Activated CD4-positive, alpha-beta T cell treated with anti-CD3 and anti-CD28 coated beads for 36 hours (primary cell): ENCODE measurements at regions of chr11 and their contacts with region 1.

Region 1: DNA sequence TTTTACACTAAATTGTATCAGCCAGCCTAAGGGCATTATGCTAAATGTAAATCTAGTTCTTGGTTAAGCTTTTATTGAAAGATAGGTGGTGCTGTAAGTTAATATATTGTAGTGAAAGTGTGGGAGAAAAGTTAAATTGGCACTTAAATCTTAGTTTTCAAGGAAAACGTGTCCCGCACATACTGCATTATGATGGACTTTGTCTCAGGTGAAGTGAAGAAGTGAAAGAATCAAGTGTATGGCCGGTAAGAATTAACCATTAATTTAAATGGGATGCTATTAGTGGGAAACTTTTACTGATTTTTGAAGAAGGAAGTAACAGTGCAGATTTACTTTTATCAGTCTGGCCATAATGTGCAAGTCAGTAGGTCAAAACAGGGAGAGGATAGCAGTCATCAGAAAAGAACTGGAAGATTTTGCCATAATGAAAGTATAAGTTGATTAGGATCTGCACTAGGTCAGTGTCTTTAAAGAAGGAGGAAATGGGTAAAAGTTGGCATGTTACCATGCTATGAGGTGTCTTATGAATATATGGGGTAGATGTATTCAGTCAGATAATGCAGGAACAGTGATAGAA is 81.6 kb downstream of the PDHX start:
- DNase-seq: no peak
- ATAC-seq: peak; percentile 39
- H3K4me3 Mint-ChIP-seq: no peak overlapping the region
- H3K27ac Mint-ChIP-seq: peak overlapping the region; percentile 11
- H3K4me1 Mint-ChIP-seq: peaks cover 30% of the 10 kb centered on the region
- H3K27me3 Mint-ChIP-seq: no peaks in the 10 kb centered on the region

Region 2: DNA sequence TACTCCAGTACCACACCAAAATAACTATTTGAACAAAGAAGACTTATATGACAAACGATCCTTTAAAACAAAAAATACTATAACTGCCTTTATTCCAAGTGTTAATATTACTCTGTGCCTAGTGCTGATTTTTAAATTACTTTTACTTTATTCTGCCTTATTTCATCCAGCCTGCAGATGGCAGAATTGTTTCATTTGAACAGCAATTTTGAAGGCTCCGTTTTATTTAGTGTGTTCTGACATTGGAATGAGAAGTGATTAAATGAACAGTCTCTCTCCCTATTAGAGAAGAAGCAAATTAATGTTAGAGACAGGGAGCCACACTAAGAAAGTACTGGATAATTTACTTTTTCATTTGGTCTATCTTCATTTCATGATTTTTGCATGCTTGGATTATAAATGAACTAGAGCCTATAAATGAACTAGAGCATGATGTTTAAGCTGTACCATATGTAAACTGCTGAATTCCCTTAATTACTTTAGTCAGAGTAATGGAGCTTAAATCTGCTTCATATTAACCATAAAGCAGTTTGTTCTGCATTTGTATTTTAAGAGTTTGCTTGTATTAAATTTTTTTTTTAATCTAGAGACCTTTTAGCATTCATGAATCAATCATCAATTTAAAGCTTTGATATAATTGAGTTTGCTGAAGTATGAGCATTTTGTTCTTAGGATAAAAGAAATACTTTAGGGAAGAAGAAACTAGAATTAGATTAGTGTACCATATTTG is 71.8 kb before region 1 on chr11:
- CTCF ChIA-PET with region 1: interaction called, 5 read pairs
- POLR2A ChIA-PET with region 1: no interaction called
- intact Hi-C with region 1: loop called in 1 of 2 experiments (anchors 2 kb)
- DNase-seq: peak; percentile 8
- ATAC-seq: peak; percentile 68
- H3K4me3 Mint-ChIP-seq: no peak overlapping the region
- H3K27ac Mint-ChIP-seq: no peak overlapping the region
- H3K4me1 Mint-ChIP-seq: peaks cover 20% of the 10 kb centered on the region
- H3K27me3 Mint-ChIP-seq: no peaks in the 10 kb centered on the region

Region 3: GRCh38 chr11:35138943-35139721 is 141.1 kb after region 1 on chr11 and contains the start of gene CD44:
- CTCF ChIA-PET with region 1: interaction called, 19 read pairs
- POLR2A ChIA-PET with region 1: interaction called, 7 read pairs
- intact Hi-C with region 1: loop called in 1 of 2 experiments (anchors 2 kb)
- DNase-seq: peak; percentile 83
- ATAC-seq: peak; percentile 67
- H3K4me3 Mint-ChIP-seq: peak within 1 kb of the TSS; percentile 83
- H3K27ac Mint-ChIP-seq: peak within 1 kb of the TSS; percentile 93
- H3K4me1 Mint-ChIP-seq: peaks cover 52% of the 10 kb centered on the region
- H3K27me3 Mint-ChIP-seq: no peaks in the 10 kb centered on the region
- total RNA-seq, gene CD44: 357 to 435 TPM

Region 4: DNA sequence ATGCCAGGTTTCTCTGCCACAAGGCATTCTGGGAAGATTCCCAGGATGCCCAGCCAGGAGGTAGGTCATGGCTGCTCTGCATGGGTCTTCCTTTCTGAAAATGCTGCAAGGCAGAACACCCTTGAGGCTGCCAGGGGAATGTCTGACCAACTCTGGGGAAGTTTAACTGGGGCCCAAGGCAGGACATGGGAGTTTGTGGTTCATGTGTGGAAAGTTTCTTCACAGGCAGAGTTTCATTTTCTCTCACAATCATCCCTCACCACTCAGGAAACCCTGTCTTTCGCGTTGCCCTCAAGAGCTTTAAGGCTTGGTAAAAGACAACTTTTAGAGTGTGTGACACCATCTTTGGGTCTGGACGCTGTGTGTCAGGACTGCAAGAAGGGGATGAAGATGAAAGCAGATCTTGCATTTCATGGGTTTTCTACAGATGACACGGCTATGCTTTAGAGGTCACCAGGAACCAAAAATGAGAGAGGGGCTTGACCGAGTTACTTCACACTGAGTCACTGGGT is 274.4 kb after region 1 on chr11:
- CTCF ChIA-PET with region 1: no interaction called
- POLR2A ChIA-PET with region 1: no interaction called
- intact Hi-C with region 1: no loop called
- DNase-seq: peak; percentile 65
- ATAC-seq: peak; percentile 84
- H3K4me3 Mint-ChIP-seq: peak overlapping the region; percentile 16
- H3K27ac Mint-ChIP-seq: peak overlapping the region; percentile 81
- H3K4me1 Mint-ChIP-seq: peaks cover 46% of the 10 kb centered on the region
- H3K27me3 Mint-ChIP-seq: peaks cover 2% of the 10 kb centered on the region